ENCODE measurements at regions of chr9 and their contacts with region 1.

Region 1: DNA sequence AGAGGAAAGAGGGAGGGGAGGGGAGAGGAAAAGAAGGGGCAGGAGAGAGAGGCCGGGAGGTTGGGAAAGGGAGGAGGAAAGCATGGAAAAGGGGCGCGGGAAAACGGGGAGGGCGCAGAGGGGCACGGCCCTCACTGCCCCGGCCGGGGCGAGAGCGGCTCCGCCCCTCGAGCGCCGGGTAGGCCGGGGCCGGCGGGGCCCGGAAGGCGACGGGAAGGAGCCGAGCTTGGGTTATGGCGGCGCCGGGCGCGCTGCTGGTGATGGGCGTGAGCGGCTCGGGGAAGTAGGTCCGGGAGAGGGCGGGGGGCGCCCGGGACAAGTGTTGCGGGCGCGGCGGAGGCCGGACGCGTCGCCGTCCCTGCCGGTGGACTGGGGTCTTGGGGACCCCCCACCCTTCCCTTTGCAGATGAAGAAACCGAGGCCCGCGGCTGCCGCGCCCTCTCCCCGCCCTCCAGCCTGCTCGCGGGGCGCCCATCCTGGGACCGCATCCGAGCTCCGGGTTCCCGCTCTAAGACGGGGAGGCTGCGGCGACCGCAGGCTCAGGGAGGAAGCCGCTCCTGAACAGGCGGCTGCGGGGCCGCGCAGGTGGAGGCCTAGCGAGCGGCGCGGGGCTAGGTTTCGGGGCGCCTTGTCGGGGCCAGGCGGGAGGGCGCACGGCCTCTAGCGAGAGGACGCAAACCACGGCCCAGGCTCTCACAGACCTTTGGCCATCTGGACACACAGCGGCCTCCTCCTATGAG is at the start of gene IDNK:
- DNase-seq: peak in 1 of 2 experiments; percentile 78
- H3K4me3 ChIP-seq: peak within 1 kb of the TSS; percentile 73 to 74 (median 74)
- H3K27ac ChIP-seq: no peak within 1 kb of the TSS
- H3K4me1 ChIP-seq: peaks cover 0 to 2% (median 0%) of the 10 kb centered on the region in 4 experiments; a peak in 3 of 7 replicates
- H3K27me3 ChIP-seq: no peaks in the 10 kb centered on the region; a peak in 1 of 7 replicates
- CTCF ChIP-seq: no peak
- EP300 ChIP-seq: no peak
- POLR2A ChIP-seq: peak in 1 of 2 experiments; percentile 68; a peak in 1 of 3 replicates
- RAD21 ChIP-seq: no peak
- total RNA-seq, gene IDNK: 0.38 and 0.48 TPM in 2 replicates

Region 2: DNA sequence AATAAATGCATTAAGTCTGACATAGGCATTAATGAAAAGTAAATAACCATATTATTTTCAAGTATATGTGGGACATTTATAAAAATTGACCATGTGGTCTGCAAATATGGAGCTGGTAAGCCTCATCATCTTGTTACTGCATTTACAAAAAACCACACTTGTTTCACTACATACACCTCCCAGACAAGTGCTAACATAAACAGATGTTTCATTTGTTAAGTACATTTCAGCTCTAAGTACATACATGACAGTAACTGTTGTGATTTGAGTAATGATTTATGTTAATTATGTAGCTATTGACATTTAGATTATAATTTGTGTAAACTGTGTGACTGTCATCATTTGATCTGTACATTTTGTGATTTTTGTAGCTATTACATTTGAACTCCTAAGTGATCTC is 13.7 kb after region 1 on chr9:
- CTCF ChIA-PET with region 1: interaction called, 13 read pairs
- POLR2A ChIA-PET with region 1: interaction called, 4 read pairs
- DNase-seq: no peak
- H3K4me3 ChIP-seq: no peak overlapping the region
- H3K27ac ChIP-seq: no peak overlapping the region
- H3K4me1 ChIP-seq: no peaks in the 10 kb centered on the region
- H3K27me3 ChIP-seq: no peaks in the 10 kb centered on the region
- CTCF ChIP-seq: no peak
- EP300 ChIP-seq: no peak
- POLR2A ChIP-seq: no peak
- RAD21 ChIP-seq: no peak